ENCODE measurements at regions of chr14 and their contacts with region 1.

Region 1: GRCh38 chr14:22664261-22664660 is 20.1 kb upstream of the OR6J1 start:
- DNase-seq: no peak
- H3K4me3 Mint-ChIP-seq: no peak overlapping the region
- H3K27ac Mint-ChIP-seq: no peak overlapping the region
- H3K4me1 Mint-ChIP-seq: peaks cover 20% of the 10 kb centered on the region
- H3K27me3 Mint-ChIP-seq: no peaks in the 10 kb centered on the region
- CTCF ChIP-seq: no peak

Region 2: DNA sequence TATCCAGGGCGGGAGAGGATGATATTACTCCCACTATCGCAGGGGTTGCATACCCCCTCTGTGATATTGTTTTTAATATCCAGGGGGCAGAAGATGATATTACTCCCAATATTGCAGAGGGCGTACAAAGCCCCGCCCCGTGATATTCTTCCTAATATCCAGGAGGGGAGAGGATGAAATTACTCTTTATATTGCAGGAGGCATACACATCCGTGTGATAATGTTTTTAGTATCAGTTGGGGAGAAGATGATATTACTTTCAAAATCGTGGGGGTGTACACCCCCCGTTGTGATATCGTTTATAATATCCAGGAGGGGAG is 49.3 kb after region 1 on chr14:
- CTCF ChIA-PET with region 1: no interaction called
- intact Hi-C with region 1: loop called (anchors 5 kb)
- DNase-seq: no peak
- H3K4me3 Mint-ChIP-seq: peak overlapping the region; percentile 74
- H3K27ac Mint-ChIP-seq: peak overlapping the region; percentile 58
- H3K4me1 Mint-ChIP-seq: no peaks in the 10 kb centered on the region
- H3K27me3 Mint-ChIP-seq: peaks cover 33% of the 10 kb centered on the region
- CTCF ChIP-seq: no peak

Region 3: DNA sequence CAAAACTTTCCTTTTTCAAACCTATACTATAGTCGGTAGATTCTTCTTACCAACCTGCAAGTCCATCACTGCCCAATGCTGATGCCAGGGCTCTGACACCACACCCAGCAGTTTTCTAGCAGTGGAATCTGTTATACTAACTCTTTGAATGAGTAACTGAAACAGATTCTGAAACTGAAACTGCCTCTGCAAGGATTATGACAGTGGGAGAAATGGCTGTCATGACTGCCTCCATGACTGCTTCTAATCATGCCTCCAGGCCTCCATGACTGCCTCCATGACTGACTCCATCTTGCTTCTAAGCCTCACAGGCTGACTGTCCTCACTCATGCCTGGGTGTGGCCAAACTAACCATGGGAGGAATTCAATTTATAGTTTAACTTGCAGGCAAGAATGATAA is 72.8 kb after region 1 on chr14:
- CTCF ChIA-PET with region 1: no interaction called
- intact Hi-C with region 1: no loop called
- DNase-seq: no peak
- H3K4me3 Mint-ChIP-seq: no peak overlapping the region
- H3K27ac Mint-ChIP-seq: no peak overlapping the region
- H3K4me1 Mint-ChIP-seq: no peaks in the 10 kb centered on the region
- H3K27me3 Mint-ChIP-seq: peaks cover 11% of the 10 kb centered on the region
- CTCF ChIP-seq: no peak

Region 4: DNA sequence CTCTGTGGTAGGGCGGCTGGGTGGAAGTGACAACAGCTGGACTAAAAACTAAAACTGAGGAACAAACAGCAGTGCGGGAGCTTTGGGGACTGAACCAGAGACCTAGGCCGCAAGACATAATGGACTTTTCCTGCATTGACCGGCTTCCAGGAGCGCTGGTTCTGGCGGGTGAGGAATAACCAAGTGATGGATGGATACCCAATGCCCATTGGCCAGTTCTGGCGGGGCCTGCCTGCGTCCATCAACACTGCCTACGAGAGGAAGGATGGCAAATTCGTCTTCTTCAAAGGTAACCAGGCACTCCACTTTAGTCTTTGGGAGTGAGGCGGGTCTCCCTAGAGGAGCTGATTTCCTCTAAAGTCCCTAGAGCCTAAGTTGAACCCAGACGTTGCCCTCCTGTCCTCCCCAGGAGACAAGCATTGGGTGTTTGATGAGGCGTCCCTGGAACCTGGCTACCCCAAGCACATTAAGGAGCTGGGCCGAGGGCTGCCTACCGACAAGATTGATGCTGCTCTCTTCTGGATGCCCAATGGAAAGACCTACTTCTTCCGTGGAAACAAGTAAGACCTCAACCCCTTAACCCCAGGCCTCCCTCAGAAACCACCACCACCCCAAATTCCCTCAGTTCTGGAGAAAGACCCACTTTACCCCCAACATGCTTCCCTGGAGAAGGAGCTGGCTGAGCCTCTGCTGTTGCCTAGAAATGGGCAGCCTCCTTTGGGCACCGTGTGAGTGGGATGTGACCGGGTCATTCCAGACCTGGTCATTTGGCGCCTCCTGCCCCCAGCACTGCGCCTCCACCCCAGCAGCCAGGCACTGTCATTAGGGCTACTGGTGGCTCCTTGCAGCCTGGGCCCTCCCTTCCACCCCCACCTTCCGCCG is 180.2 kb after region 1 on chr14:
- CTCF ChIA-PET with region 1: no interaction called
- intact Hi-C with region 1: no loop called
- DNase-seq: no peak
- H3K4me3 Mint-ChIP-seq: no peak overlapping the region
- H3K27ac Mint-ChIP-seq: no peak overlapping the region
- H3K4me1 Mint-ChIP-seq: no peaks in the 10 kb centered on the region
- H3K27me3 Mint-ChIP-seq: peaks cover under 1% of the 10 kb centered on the region
- CTCF ChIP-seq: no peak